ENCODE measurements at regions of chr4 and their contacts with region 1.

Region 1: DNA sequence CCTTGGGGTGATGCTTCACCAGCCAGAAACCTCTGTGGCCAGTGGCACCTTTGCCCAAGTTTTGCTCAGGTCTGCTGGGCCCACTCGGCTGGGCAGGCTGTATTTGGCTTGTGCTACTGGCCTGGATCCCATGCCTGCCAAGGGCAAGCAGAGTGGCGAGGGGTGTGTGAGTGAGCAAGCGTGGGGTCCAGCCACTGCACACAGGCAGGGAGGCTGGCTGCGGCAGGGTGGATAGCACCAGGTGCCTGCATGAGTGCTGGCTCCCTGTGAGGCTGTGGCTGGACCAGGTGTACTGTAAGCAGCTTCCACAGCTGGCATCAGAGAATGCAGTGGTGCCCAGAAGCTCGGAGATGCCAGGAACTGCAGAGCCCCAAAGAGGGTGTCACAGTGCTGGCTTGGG is 478.5 kb downstream of the STPG2 start:
- DNase-seq: no peak
- ATAC-seq: no peak
- H3K4me3 Mint-ChIP-seq: no peak overlapping the region
- H3K27ac Mint-ChIP-seq: no peak overlapping the region
- H3K4me1 Mint-ChIP-seq: no peaks in the 10 kb centered on the region
- H3K27me3 Mint-ChIP-seq: no peaks in the 10 kb centered on the region

Region 2: DNA sequence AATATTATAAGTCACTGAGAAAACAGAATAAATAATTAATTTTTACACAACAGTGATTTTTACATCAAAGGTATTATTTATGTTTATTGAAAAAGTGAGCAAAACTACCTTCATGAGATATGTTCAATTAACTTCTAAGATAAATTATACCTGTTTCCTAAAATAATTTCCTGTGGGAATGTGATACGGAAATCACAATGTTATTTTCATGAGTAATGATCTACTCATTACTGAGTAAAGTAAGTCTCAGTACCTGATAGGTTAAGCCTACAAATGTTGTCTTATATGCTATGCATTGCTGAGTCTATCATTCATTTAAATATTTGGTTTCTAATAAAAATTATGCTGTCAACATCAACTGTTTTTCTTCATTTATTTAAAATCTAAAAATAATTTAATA is 154.6 kb after region 1 on chr4:
- CTCF ChIA-PET with region 1: no interaction called
- POLR2A ChIA-PET with region 1: no interaction called
- intact Hi-C with region 1: no loop called
- DNase-seq: no peak
- ATAC-seq: no peak
- H3K4me3 Mint-ChIP-seq: no peak overlapping the region
- H3K27ac Mint-ChIP-seq: no peak overlapping the region
- H3K4me1 Mint-ChIP-seq: no peaks in the 10 kb centered on the region
- H3K27me3 Mint-ChIP-seq: no peaks in the 10 kb centered on the region

Region 3: GRCh38 chr4:99117876-99118693 is 1453.3 kb after region 1 on chr4:
- CTCF ChIA-PET with region 1: no interaction called
- POLR2A ChIA-PET with region 1: no interaction called
- intact Hi-C with region 1: loop called in 1 of 2 experiments (anchors 10 kb)
- DNase-seq: no peak
- ATAC-seq: no peak
- H3K4me3 Mint-ChIP-seq: no peak overlapping the region
- H3K27ac Mint-ChIP-seq: no peak overlapping the region
- H3K4me1 Mint-ChIP-seq: no peaks in the 10 kb centered on the region
- H3K27me3 Mint-ChIP-seq: no peaks in the 10 kb centered on the region

Measured in activated CD4-positive, alpha-beta T cell treated with anti-CD3 and anti-CD28 coated beads for 36 hours (primary cell).